ENCODE measurements at regions of chr17 and their contacts with region 1.

Region 1: GRCh38 chr17:44775136-44775837 is 16.5 kb downstream of the ADAM11 start:
- DNase-seq: peak; percentile 99
- H3K4me3 Mint-ChIP-seq: peak overlapping the region; percentile 83
- H3K27ac Mint-ChIP-seq: no peak overlapping the region
- H3K4me1 Mint-ChIP-seq: peaks cover 2% of the 10 kb centered on the region
- H3K27me3 Mint-ChIP-seq: peaks cover 7% of the 10 kb centered on the region

Region 2: DNA sequence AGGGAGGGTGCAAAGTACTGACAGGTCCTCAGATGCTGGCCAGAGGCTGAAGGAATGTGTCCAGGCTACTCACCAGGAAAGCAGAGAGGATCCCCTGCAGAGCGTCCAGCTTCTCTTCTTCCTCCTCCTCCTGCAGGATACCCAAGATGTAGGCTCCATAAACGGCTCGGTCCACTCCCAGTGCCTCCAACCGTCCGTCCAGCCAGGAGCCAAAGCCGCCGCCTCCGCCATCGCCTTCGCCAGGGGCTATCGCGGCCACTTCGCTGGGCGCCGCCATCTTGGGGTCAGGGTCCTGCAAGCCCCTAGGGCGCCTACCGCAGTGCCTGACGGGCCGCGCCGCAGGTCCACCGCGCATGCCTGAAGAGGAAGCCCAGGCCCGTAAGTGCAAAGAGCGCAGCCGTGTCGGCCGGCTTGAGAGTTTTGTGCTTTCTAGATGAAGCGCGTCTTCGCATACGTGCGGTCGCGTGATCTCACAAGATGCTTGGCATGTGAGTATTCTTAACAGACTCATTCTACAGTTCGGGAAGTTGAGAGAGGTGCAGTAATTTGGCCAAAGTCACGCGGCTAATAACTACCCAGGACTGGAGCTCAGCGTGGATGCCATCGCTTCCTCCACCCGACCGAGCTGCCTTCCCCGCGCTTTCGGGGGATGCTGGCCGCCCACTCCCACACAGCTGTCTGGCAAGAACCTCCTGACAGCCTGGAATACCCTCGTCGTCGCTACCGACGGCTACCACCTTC is 85.6 kb before region 1 on chr17 and contains the start of gene CCDC43:
- CTCF ChIA-PET with region 1: interaction called, 4 read pairs
- intact Hi-C with region 1: loop called (anchors 1 kb)
- DNase-seq: peak; percentile 94
- H3K4me3 Mint-ChIP-seq: peak within 1 kb of the TSS; percentile 99
- H3K27ac Mint-ChIP-seq: peak within 1 kb of the TSS; percentile 89
- H3K4me1 Mint-ChIP-seq: peaks cover 24% of the 10 kb centered on the region
- H3K27me3 Mint-ChIP-seq: no peaks in the 10 kb centered on the region
- total RNA-seq, gene CCDC43: 29.1 to 31.8 TPM

Region 3: GRCh38 chr17:44864866-44865660 is 89.8 kb after region 1 on chr17:
- CTCF ChIA-PET with region 1: interaction called, 147 read pairs
- intact Hi-C with region 1: loop called (anchors 1 kb)
- DNase-seq: peak; percentile 78
- H3K4me3 Mint-ChIP-seq: no peak overlapping the region
- H3K27ac Mint-ChIP-seq: no peak overlapping the region
- H3K4me1 Mint-ChIP-seq: no peaks in the 10 kb centered on the region
- H3K27me3 Mint-ChIP-seq: no peaks in the 10 kb centered on the region

Region 4: GRCh38 chr17:44947461-44948314 is 172.4 kb after region 1 on chr17 and contains the start of gene KIF18B:
- CTCF ChIA-PET with region 1: no interaction called
- intact Hi-C with region 1: loop called (anchors 1 kb)
- DNase-seq: peak; percentile 97
- H3K4me3 Mint-ChIP-seq: peak within 1 kb of the TSS; percentile 84
- H3K27ac Mint-ChIP-seq: peak within 1 kb of the TSS; percentile 74
- H3K4me1 Mint-ChIP-seq: peaks cover 7% of the 10 kb centered on the region
- H3K27me3 Mint-ChIP-seq: peaks cover 5% of the 10 kb centered on the region
- total RNA-seq, gene KIF18B: 54.9 to 55.4 TPM

Region 5: GRCh38 chr17:45060797-45061605 is 285.7 kb after region 1 on chr17 and contains the start of gene NMT1:
- CTCF ChIA-PET with region 1: no interaction called
- intact Hi-C with region 1: loop called (anchors 1 kb)
- DNase-seq: peak; percentile 99
- H3K4me3 Mint-ChIP-seq: peak within 1 kb of the TSS; percentile 87
- H3K27ac Mint-ChIP-seq: peak within 1 kb of the TSS; percentile 93
- H3K4me1 Mint-ChIP-seq: peaks cover 47% of the 10 kb centered on the region
- H3K27me3 Mint-ChIP-seq: no peaks in the 10 kb centered on the region
- total RNA-seq, gene NMT1: 234 to 235 TPM

Region 6: DNA sequence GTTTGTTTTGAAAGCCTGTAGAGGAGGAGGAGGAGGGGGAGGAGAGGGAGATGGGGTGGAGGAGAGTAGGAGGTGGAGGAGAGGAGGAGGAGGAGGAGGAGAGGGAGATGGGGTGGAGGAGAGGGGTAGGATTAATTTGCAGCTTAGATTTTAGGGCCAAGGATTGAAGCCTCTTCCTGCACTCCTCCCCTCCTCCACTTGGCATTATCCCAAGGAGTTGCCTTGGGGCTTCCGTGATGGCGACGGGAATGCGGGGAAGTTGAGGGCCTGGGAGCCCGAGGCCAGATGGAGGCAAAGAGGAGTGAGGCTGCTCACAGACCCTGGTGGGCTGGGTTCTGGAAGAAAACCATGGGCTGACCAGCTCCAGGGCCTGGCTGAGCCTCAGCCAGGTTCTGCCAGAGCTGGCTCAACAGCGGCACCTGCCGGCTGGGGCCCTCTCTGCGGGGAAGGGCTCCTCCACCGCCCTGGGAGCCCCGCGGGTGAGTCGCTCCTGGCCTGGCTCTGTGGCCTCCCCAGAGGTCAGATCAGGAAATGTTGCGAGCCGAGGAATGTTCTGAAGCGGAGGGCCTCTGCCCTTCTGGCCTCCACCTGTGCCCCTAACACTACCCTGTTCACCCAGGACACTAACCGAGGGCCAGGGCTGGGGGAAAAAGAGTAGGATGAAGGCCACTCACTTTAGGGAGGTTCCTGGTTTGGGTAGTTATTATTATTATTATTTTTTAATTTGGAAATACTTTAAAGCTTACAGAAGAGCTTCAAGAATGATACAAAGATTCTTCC is 422.5 kb after region 1 on chr17:
- CTCF ChIA-PET with region 1: interaction called, 3 read pairs
- intact Hi-C with region 1: loop called (anchors 10 kb)
- DNase-seq: peak; percentile 94
- H3K4me3 Mint-ChIP-seq: no peak overlapping the region
- H3K27ac Mint-ChIP-seq: no peak overlapping the region
- H3K4me1 Mint-ChIP-seq: peaks cover 3% of the 10 kb centered on the region
- H3K27me3 Mint-ChIP-seq: no peaks in the 10 kb centered on the region